ENCODE measurements at regions of chr5 and their contacts with region 1.

Region 1: GRCh38 chr5:135560858-135561257 is 17.9 kb downstream of the CXCL14 start:
- DNase-seq: peak; percentile 54
- H3K4me3 ChIP-seq: no peak overlapping the region
- H3K27ac ChIP-seq: no peak overlapping the region
- H3K4me1 ChIP-seq: no peaks in the 10 kb centered on the region
- H3K27me3 ChIP-seq: peaks cover 10 to 21% of the 10 kb centered on the region in 2 experiments
- CTCF ChIP-seq: peak; percentile 83 to 84
- POLR2A ChIP-seq: no peak

Region 2: DNA sequence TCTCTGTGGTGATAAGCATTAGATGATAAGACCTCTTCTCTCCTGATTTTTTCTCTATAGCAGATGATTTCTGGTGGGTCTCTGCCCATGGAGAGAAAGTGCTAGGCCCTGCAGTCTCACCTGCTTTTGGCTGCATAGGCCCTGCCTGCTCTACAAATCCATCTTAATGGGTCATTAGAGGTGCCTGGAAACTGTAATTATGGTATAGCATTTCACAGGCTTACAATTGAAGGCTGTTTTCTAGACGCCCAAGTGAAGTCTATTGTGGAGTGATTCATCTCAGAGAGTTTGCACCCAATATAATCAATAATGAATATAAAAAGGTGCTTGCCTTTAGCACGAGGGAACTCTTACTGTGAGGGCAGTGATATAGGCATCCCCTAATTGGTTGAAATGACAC is 58.9 kb before region 1 on chr5:
- CTCF ChIA-PET with region 1: interaction called, 11 read pairs
- POLR2A ChIA-PET with region 1: no interaction called
- dilution Hi-C with region 1: no loop called
- intact Hi-C with region 1: no loop called
- DNase-seq: no peak
- H3K4me3 ChIP-seq: no peak overlapping the region
- H3K27ac ChIP-seq: no peak overlapping the region
- H3K4me1 ChIP-seq: no peaks in the 10 kb centered on the region
- H3K27me3 ChIP-seq: peaks cover 0 to 17% of the 10 kb centered on the region in 2 experiments
- CTCF ChIP-seq: no peak
- POLR2A ChIP-seq: no peak

Region 3: DNA sequence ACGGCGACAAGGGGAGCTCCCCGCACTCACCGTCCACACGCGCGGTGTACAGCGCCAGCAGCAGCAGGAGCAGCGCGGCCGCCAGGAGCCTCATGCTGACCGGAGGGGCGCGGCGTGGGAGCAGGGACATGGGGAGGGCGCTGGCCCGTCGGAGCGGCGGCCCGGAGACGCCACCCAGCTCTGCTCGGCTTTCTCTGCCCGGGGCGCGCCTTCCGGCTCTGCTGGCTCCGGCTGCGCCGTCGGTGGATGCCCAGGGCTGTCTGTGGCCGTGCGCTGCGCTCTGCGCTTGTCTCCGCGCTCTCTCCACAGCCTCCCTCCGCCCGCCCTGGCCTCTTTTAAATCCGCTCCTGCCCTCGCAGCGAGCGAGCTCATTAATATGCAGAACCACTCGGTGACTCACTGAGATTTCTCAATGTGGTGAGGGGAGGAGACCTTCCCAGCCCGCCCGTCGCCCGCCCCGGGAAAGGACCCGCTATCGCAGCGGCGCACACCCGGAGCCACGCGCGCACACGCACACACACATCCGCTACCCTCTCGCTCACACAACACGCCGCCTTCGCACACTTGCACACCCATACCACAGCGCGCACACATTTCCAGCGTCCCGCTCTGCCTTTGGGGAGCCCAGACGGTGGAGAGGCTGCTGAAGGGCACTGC is 18.0 kb after region 1 on chr5 and contains the start of gene CXCL14:
- CTCF ChIA-PET with region 1: interaction called, 44 read pairs
- POLR2A ChIA-PET with region 1: no interaction called
- dilution Hi-C with region 1: no loop called
- intact Hi-C with region 1: no loop called
- DNase-seq: no peak
- H3K4me3 ChIP-seq: no peak within 1 kb of the TSS
- H3K27ac ChIP-seq: no peak within 1 kb of the TSS
- H3K4me1 ChIP-seq: no peaks in the 10 kb centered on the region
- H3K27me3 ChIP-seq: peaks cover 34 to 40% of the 10 kb centered on the region in 2 experiments
- CTCF ChIP-seq: no peak
- POLR2A ChIP-seq: no peak
- total RNA-seq, gene CXCL14: not detected in 2 replicates

Region 4: DNA sequence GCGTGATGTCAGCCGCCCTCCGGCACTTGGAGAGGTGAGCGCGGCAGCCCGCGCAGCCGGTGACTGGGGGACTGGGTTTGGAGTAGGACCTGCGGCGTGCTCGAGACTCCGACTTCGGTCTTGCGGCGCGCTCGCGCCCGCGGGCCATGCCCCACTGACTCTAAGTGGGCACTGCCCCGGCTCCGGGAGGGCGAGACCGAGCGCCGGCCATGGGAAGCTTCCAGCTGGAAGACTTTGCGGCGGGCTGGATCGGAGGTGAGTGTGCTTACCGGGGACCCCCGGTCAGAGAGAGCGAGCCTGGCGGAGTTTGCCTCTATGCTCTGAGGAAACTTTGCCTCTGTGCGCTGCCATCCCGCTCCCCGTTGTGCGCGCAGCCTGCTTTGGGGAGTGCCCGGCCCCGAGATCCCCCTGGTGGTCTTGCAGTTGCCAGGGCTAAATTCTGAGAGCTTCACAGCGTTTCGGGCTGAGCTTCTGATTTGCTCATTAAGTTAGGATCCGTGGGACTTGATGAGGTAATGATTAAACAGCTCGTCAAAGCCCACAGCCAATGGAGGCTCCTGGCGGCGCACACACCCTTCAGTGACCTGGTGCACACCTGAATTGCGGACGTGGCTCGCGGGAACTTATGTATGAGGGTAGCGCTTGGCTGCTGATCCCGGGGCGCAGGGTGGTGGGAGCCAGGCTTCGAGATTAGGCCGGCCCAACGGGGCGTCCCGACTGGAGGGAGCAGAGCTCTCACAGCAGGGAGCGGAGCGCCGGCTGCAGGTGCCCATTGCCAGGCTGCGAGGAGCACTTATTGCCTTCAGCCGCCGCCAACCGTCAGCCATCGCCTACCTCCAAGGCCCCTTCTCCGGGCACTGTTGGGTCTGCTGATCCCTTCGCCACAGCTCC is 274.0 kb after region 1 on chr5 and contains the start of gene SLC25A48:
- CTCF ChIA-PET with region 1: interaction called, 120 read pairs
- POLR2A ChIA-PET with region 1: no interaction called
- dilution Hi-C with region 1: no loop called
- intact Hi-C with region 1: loop called (anchors 1 kb)
- DNase-seq: peak; percentile 21
- H3K4me3 ChIP-seq: no peak within 1 kb of the TSS
- H3K27ac ChIP-seq: no peak within 1 kb of the TSS
- H3K4me1 ChIP-seq: no peaks in the 10 kb centered on the region
- H3K27me3 ChIP-seq: peaks cover 12 to 22% of the 10 kb centered on the region in 2 experiments
- CTCF ChIP-seq: peak in 1 of 2 donors; percentile 48
- POLR2A ChIP-seq: no peak
- total RNA-seq, gene SLC25A48: not detected in 2 replicates

Region 5: GRCh38 chr5:135857630-135858304 is 296.9 kb after region 1 on chr5:
- CTCF ChIA-PET with region 1: no interaction called
- POLR2A ChIA-PET with region 1: no interaction called
- dilution Hi-C with region 1: no loop called
- intact Hi-C with region 1: no loop called
- DNase-seq: no peak
- H3K4me3 ChIP-seq: no peak overlapping the region
- H3K27ac ChIP-seq: no peak overlapping the region
- H3K4me1 ChIP-seq: no peaks in the 10 kb centered on the region
- H3K27me3 ChIP-seq: peaks cover 0 to 2% of the 10 kb centered on the region in 2 experiments
- CTCF ChIP-seq: no peak
- POLR2A ChIP-seq: no peak

Region 6: GRCh38 chr5:136080483-136081216 is 519.8 kb after region 1 on chr5:
- CTCF ChIA-PET with region 1: no interaction called
- POLR2A ChIA-PET with region 1: no interaction called
- dilution Hi-C with region 1: no loop called
- intact Hi-C with region 1: no loop called
- DNase-seq: peak; percentile 96
- H3K4me3 ChIP-seq: peak overlapping the region; percentile 55 to 84 (median 68)
- H3K27ac ChIP-seq: peak overlapping the region; percentile 60
- H3K4me1 ChIP-seq: peaks cover 13% of the 10 kb centered on the region
- H3K27me3 ChIP-seq: peaks cover 15 to 27% of the 10 kb centered on the region in 2 experiments
- CTCF ChIP-seq: no peak
- POLR2A ChIP-seq: peak; percentile 41